Left cardiac atrium (tissue), 4 donors: ENCODE measurements at regions of chr16 and their contacts with region 1.

Region 1: GRCh38 chr16:1119766-1120576 is 23.9 kb upstream of the C1QTNF8 start:
- DNase-seq: no peak
- ATAC-seq: no peak

Region 2: DNA sequence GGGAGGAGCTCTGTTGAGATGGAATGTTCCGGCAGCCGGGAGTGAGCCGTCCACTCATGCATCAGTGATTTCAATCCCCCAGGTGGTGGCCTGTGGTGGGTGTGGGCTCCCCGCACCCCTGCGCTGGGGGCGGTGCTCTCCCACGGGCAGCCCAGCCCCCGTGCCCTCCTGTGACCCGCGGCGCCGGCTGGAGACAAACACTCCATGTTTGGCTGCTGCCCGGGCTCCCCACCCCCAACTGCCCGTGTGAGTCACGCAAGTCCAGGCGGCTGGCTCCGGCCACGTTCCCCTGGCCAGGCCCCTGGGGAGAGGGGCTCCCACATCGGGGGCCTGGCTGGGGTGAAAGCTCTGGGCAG is 62.3 kb after region 1 on chr16:
- intact Hi-C with region 1: loop called in 1 of 2 experiments (anchors 5 kb)
- DNase-seq: peak; percentile 75
- ATAC-seq: peak; percentile 76 to 87